T-cell (primary cell): ENCODE measurements at regions of chr11 and their contacts with region 1.

Region 1: DNA sequence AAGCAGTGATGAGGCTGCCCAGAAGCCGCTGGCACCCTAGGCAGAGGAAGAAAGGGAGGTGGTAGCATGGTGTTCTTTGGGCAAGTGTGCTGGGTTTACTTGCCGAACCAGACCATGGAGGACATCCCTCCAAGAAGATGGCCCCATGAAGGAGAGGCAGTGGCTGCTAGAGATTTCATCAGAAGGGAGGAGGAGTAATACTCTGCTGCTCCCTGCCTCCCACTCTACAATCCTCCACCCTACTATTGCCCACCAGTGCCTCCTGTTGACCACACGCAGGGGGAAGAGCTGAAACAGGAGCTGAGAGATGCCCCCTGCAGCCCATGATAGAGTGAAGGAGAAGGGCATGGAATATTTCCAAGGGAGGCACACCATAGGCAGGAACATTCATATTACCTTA is 51.0 kb upstream of the PRSS23 start:
- DNase-seq: no peak
- ATAC-seq: no peak
- H3K4me3 ChIP-seq: no peak overlapping the region
- H3K4me3 Mint-ChIP-seq: no peak overlapping the region
- H3K27ac ChIP-seq: no peak overlapping the region
- H3K27ac Mint-ChIP-seq: no peak overlapping the region
- H3K4me1 ChIP-seq: no peaks in the 10 kb centered on the region
- H3K4me1 Mint-ChIP-seq: no peaks in the 10 kb centered on the region
- H3K27me3 ChIP-seq: no peaks in the 10 kb centered on the region
- H3K27me3 Mint-ChIP-seq: peaks cover 1 to 22% of the 10 kb centered on the region in 2 donors

Region 2: GRCh38 chr11:86637988-86638387 is 111.4 kb before region 1 on chr11:
- CTCF ChIA-PET with region 1: no interaction called
- POLR2A ChIA-PET with region 1: interaction called in 1 of 2 experiments, 16 read pairs
- DNase-seq: peak in 1 of 35 experiments; percentile 17
- ATAC-seq: peak in 1 of 4 experiments; percentile 22
- H3K4me3 ChIP-seq: no peak overlapping the region
- H3K4me3 Mint-ChIP-seq: no peak overlapping the region
- H3K27ac ChIP-seq: no peak overlapping the region
- H3K27ac Mint-ChIP-seq: no peak overlapping the region
- H3K4me1 ChIP-seq: peaks cover 0 to 4% of the 10 kb centered on the region in 2 experiments
- H3K4me1 Mint-ChIP-seq: peaks cover 7 to 12% (median 8%) of the 10 kb centered on the region in 3 donors
- H3K27me3 ChIP-seq: no peaks in the 10 kb centered on the region
- H3K27me3 Mint-ChIP-seq: peaks cover 2 to 4% of the 10 kb centered on the region in 2 donors